ENCODE measurements at regions of chr1 and their contacts with region 1.

Region 1: GRCh38 chr1:161792740-161793139 is 26.6 kb downstream of the ATF6 start:
- DNase-seq: no peak
- ATAC-seq: peak; percentile 77
- H3K4me3 Mint-ChIP-seq: no peak overlapping the region
- H3K27ac Mint-ChIP-seq: no peak overlapping the region
- H3K4me1 Mint-ChIP-seq: peaks cover 5% of the 10 kb centered on the region
- H3K27me3 Mint-ChIP-seq: no peaks in the 10 kb centered on the region
- CTCF ChIP-seq: peak; percentile 73

Region 2: GRCh38 chr1:161772397-161772796 is 20.3 kb before region 1 on chr1:
- CTCF ChIA-PET with region 1: interaction called, 11 read pairs
- POLR2A ChIA-PET with region 1: no interaction called
- intact Hi-C with region 1: no loop called
- DNase-seq: no peak
- ATAC-seq: no peak
- H3K4me3 Mint-ChIP-seq: no peak overlapping the region
- H3K27ac Mint-ChIP-seq: no peak overlapping the region
- H3K4me1 Mint-ChIP-seq: peaks cover 30% of the 10 kb centered on the region
- H3K27me3 Mint-ChIP-seq: no peaks in the 10 kb centered on the region
- CTCF ChIP-seq: no peak

Region 3: DNA sequence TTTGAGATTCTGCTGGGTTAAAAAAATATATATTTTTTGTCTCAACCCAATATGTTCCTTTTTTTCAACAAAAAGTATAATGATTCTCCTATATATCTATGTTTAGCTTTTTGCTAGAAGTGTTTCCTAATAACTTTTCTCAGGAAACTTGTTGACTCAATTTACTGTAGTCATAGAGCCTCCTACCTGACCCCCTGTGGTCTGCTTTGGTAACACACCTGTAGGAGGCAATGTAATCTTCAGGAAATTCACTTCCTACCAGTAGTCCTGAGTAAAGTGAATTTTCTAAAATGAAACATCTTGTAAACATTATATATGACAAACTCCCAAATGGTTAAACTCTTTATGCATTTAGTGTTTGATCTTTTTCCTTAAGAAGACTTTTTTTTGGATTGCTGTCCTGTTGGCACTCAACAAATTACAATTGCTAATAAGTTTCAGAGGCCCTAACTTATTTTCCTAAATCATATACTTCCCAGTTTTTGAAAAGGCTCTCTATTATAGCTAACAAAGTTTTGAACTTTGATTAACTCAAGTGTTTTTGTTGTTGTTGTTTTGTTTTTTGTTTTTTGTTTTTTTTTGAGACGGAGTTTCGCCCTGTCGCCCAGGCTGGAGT is 112.6 kb after region 1 on chr1:
- CTCF ChIA-PET with region 1: interaction called, 12 read pairs
- POLR2A ChIA-PET with region 1: no interaction called
- intact Hi-C with region 1: no loop called
- DNase-seq: peak; percentile 42
- ATAC-seq: peak; percentile 73
- H3K4me3 Mint-ChIP-seq: no peak overlapping the region
- H3K27ac Mint-ChIP-seq: no peak overlapping the region
- H3K4me1 Mint-ChIP-seq: peaks cover 18% of the 10 kb centered on the region
- H3K27me3 Mint-ChIP-seq: no peaks in the 10 kb centered on the region
- CTCF ChIP-seq: peak; percentile 83

Region 4: DNA sequence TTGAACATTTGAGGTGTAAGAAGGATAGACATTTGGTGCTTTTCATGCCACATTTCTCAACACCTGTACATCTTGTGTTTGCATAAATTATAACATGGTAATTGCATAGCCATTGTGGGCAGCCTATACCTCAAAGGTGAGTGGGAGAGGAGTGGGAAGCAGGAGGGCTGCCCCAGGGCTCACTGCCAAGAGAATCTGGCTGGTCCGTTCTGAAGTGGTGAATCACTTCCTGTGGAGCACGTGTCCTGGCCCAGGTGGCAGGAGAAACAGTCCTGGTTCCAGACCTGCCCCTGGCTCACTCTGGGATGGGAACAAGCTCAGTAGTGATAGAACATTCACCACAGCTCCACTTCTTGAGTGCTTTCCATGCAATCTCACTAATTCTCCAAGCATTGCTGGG is 242.5 kb after region 1 on chr1:
- CTCF ChIA-PET with region 1: interaction called, 166 read pairs
- POLR2A ChIA-PET with region 1: interaction called, 4 read pairs
- intact Hi-C with region 1: loop called (anchors 5 kb)
- DNase-seq: peak; percentile 25
- ATAC-seq: peak; percentile 34
- H3K4me3 Mint-ChIP-seq: no peak overlapping the region
- H3K27ac Mint-ChIP-seq: no peak overlapping the region
- H3K4me1 Mint-ChIP-seq: peaks cover 6% of the 10 kb centered on the region
- H3K27me3 Mint-ChIP-seq: peaks cover 10% of the 10 kb centered on the region
- CTCF ChIP-seq: no peak